CD14-positive monocyte (primary cell): ENCODE measurements at regions of chr7 and their contacts with region 1.

Region 1: GRCh38 chr7:90629297-90629918 is 33.3 kb downstream of the CDK14 start:
- DNase-seq: peak; percentile 59 to 83 (median 71)
- H3K4me3 ChIP-seq: no peak overlapping the region
- H3K4me3 Mint-ChIP-seq: no peak overlapping the region
- H3K27ac ChIP-seq: no peak overlapping the region
- H3K27ac Mint-ChIP-seq: peak overlapping the region in 3 of 7 donors; percentile 1 to 35 (median 13)
- H3K4me1 ChIP-seq: peaks cover 4 to 7% of the 10 kb centered on the region in 2 donors
- H3K4me1 Mint-ChIP-seq: peaks cover 8% of the 10 kb centered on the region
- H3K27me3 ChIP-seq: no peaks in the 10 kb centered on the region
- H3K27me3 Mint-ChIP-seq: peaks cover 0 to under 1% (median 0%) of the 10 kb centered on the region in 3 donors
- CTCF ChIP-seq: peak; percentile 82

Region 2: GRCh38 chr7:90552521-90552920 is 76.9 kb before region 1 on chr7:
- intact Hi-C with region 1: loop called in 1 of 2 experiments (anchors 5 kb)
- DNase-seq: peak in 2 of 3 donors; percentile 8 to 39
- H3K4me3 ChIP-seq: no peak overlapping the region
- H3K4me3 Mint-ChIP-seq: no peak overlapping the region
- H3K27ac ChIP-seq: no peak overlapping the region
- H3K27ac Mint-ChIP-seq: no peak overlapping the region
- H3K4me1 ChIP-seq: no peaks in the 10 kb centered on the region
- H3K4me1 Mint-ChIP-seq: no peaks in the 10 kb centered on the region
- H3K27me3 ChIP-seq: peaks cover 0 to 3% of the 10 kb centered on the region in 2 donors
- H3K27me3 Mint-ChIP-seq: peaks cover 3 to 12% (median 7%) of the 10 kb centered on the region in 3 donors
- CTCF ChIP-seq: peak; percentile 65

Region 3: GRCh38 chr7:90595801-90596671 is 33.4 kb before region 1 on chr7 and contains the start of gene CDK14:
- intact Hi-C with region 1: no loop called
- DNase-seq: peak; percentile 92 to 94 (median 94)
- H3K4me3 ChIP-seq: peak within 1 kb of the TSS; percentile 61 to 94 (median 73)
- H3K4me3 Mint-ChIP-seq: peak within 1 kb of the TSS; percentile 91 to 95
- H3K27ac ChIP-seq: peak within 1 kb of the TSS; percentile 59 to 94
- H3K27ac Mint-ChIP-seq: peak within 1 kb of the TSS; percentile 88 to 97 (median 94)
- H3K4me1 ChIP-seq: peaks cover 39 to 56% of the 10 kb centered on the region in 2 donors
- H3K4me1 Mint-ChIP-seq: peaks cover 54% of the 10 kb centered on the region
- H3K27me3 ChIP-seq: peaks cover 0 to 10% of the 10 kb centered on the region in 2 donors
- H3K27me3 Mint-ChIP-seq: peaks cover 3 to 13% (median 12%) of the 10 kb centered on the region in 3 donors
- CTCF ChIP-seq: peak; percentile 71
- polyA plus RNA-seq, gene CDK14: 1.7 to 2.5 (median 2.1) TPM